AG04449 (cell line): ENCODE measurements at regions of chr1 and their contacts with region 1.

Region 1: DNA sequence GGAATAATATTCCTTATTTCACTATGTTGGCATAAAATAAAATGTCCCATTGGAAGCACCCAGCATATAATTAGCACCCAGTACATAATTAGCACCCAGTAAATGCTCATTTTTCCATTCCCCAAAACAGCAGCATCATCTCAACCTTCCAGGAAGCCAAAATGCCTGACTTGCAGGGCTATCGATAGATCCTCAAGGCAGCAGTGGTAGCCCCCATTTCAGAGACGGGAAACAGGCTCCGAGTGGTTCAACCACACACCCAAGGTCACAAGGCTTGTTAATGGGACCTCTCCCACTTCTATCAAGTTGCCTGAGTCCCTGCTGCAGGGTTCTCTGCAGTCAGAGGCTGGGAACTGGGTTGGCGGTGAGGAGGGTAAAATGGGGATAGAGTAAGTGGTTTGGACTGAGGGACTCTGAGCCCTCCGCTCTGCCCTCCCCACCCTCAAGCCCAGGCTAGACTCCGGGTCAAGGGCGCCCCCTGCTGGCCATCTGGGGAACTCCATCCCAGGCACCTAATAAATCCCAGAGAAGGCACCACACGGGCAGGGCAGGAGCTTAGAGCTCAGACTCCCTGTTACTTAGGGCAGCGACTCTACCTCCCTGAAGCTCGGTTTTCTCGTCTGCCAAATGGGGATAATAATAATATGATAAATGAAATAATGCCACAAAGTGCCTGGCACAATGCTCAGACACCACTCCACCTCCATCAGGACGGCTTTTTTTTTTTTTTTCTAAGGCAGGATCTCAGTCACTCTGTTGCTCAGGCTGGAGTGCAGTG is 21.9 kb upstream of the LAPTM5 start:
- DNase-seq: no peak
- H3K4me3 ChIP-seq: no peak overlapping the region
- CTCF ChIP-seq: peak; percentile 93

Region 2: DNA sequence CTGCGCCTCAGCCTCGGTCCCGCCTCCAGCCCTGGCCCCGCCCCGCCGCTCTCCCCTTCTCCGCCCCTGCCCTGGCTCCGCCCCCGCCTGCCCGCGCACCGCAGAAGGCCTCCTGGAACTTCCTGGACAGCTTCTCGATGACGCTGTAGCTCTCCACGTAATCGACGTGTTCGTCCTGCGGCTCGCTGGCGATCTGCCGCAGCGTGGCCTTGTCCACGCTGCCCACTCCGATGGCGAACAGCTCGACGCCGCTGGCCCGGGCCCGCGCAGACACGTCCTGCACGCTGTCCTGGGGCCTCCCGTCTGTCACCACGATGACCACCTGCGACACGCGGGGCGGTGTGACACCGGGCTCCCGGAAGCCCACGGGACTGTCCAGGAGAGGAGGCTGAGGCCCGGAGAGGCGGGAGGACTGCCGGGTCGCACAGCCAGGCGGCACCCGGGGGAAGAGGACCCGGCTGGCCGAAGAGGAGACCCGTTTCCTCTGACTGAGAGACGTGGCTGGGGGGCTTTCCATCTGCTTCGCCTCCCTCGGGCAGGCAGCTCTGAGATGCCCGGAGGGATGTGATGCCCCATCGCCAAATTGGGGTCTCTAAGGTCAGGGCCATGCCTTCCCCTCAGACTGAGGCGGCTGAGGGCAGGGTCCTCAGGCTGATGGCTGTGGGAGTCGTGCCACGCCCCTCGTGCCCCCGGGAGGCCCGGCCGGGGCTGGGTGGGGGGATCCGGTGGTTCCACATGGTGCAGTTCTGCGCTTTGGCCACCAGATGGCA is 60.7 kb before region 1 on chr1:
- CTCF ChIA-PET with region 1: interaction called, 943 read pairs
- POLR2A ChIA-PET with region 1: interaction called, 13 read pairs
- DNase-seq: peak; percentile 86
- H3K4me3 ChIP-seq: peak overlapping the region; percentile 69
- CTCF ChIP-seq: peak; percentile 86

Region 3: DNA sequence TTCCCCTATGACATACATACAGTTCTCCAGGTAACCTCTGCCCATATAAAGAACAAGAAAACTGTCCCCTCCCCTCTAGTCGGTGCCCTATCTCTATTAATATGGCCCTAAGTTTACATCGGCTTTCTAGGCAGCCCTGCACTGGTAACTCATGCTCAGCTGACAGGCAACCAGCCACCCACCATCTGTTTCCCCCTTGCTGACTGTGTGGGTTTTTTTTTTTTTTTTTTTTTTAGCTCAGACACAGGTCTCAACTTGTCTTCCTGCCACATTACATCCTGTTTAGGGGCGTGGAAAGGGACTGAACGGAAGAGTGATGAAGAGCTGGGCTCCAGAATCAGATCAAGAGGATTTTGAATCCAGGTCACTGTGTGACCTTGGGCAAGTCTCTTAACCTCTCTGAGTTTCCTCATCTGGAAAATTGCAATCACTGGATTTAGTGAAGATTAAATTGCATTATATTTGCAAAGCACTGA is 35.9 kb before region 1 on chr1:
- CTCF ChIA-PET with region 1: interaction called, 31 read pairs
- POLR2A ChIA-PET with region 1: no interaction called
- DNase-seq: no peak
- H3K4me3 ChIP-seq: no peak overlapping the region
- CTCF ChIP-seq: no peak

Region 4: GRCh38 chr1:30756545-30757195 is 22.8 kb before region 1 on chr1:
- CTCF ChIA-PET with region 1: interaction called, 221 read pairs
- POLR2A ChIA-PET with region 1: no interaction called
- DNase-seq: peak; percentile 50
- H3K4me3 ChIP-seq: no peak overlapping the region
- CTCF ChIP-seq: no peak

Region 5: GRCh38 chr1:30801771-30802198 is 22.3 kb after region 1 on chr1:
- CTCF ChIA-PET with region 1: interaction called, 548 read pairs
- POLR2A ChIA-PET with region 1: no interaction called
- DNase-seq: no peak
- H3K4me3 ChIP-seq: peak overlapping the region; percentile 15; the same call in 1 of the 2 replicates
- CTCF ChIP-seq: peak; percentile 95

Region 6: DNA sequence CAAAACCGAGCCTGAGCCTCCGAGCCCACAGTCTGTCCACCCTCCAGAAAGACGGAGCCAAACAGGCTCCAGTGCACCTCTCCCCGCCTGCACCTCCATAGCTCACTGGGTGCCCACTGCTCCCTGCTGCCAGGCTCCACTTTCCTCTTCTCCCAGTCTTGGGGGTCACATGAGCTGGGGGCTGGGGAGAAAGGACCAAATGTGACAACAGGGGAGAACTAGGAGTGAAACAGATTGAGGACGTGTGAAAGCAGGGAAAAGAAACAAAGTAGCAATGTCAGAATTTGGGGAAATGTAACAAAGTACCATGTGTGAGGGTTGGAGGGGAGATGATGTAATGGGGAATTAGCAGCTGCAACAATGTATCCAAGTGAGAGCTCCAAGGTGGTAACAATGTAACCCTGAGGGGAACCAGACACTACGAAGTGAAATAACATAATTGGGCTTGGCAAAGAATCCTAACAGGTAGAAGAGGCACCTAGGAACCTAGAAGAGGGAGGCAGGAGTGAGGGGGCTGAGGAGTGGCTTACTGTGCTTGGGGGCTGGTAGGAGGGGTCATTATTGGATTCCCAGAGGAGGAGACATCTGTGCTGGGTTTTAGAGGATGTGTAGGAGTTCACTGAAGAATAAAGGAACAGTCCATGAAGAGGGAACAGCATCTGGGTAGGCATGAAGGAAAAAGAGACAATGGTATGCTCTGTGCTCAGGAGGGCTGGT is 116.6 kb after region 1 on chr1:
- CTCF ChIA-PET with region 1: interaction called, 12 read pairs
- POLR2A ChIA-PET with region 1: interaction called, 3 read pairs
- DNase-seq: no peak
- H3K4me3 ChIP-seq: no peak overlapping the region
- CTCF ChIP-seq: no peak

Region 7: DNA sequence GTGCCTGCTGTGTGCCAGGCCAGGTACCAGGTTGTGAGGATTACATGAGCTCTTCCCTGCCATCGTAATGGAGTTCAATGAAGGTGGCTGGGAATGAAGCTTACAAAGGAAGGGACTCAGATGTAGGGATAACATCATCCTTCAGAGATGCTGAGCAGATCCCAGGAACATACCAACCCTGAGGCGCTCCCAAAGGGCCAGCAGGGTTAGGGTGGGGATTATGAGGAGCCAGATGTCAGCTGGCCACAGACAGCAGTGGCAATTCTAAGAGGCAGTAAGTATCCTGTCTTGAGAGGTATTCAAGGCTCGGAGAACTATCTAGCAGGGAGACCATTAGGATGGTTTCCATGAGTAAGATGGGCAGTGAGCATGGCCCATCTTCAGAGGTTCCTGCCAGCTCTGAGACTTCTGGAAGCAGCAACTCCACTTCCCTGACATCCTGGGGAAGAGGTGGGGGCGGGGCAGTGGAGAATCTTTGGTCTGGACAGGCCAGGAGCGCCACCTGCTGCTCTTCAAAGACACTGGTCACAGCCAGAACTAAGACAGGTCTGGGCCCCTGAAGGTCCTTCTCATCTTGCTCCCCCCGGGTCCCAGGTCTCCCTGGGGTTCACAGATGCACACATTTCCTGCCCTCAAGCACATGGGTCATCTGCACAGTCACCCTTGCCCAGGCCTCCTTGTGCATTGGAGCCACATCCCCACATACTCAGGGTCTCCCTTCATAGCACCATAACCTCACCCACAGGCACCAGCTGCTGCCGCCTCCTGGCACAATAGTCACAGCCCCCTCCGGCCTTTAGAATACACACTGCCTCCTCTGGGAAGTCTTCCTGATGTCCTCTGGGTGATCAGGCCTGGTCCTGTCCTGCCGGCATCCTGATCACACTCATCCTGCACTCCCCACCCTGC is 131.8 kb after region 1 on chr1:
- CTCF ChIA-PET with region 1: interaction called, 448 read pairs
- POLR2A ChIA-PET with region 1: no interaction called
- DNase-seq: no peak
- H3K4me3 ChIP-seq: no peak overlapping the region
- CTCF ChIP-seq: peak; percentile 94

Region 8: DNA sequence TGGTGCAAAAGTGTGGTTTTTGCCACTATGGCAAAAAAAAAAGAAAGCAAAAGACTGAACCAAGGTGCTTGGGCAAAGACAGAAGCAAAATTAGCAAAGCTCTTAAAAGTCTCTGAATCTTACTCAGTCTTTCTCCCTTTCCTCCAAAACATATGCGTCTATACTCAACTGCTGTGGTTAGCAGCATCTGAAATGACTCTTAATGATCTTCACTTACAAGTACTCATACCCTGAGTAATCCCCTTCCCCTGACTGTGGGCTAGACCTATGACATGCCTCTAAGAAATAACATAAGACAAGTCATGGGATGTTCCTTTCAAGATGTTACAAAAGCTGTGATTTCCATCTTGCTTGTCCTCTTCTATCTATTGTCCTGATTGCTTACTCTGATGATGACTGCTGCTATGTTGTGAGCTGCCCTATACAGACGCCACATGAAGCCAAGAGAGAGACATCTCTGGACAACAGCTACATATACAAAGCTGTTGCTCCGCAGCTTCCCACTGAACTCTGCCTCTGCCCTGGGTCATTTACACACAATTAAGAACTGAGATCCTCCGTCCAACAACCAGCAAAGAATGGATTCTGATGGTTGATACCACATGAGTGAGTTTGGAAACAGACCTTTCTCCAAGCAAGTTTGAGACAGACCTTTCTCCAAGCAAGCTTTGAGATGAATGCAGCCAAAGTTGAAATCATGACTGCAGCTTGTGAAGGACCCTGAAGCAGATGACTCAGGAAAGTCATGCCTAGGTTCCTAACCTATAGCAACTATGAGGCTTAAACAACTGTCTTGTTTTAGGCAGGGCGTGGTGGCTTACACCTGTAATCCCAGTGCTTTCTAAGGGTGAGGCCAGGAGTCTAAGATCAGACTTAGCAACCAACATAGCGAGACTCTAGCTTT is 230.9 kb after region 1 on chr1:
- CTCF ChIA-PET with region 1: no interaction called
- POLR2A ChIA-PET with region 1: no interaction called
- DNase-seq: peak; percentile 47
- H3K4me3 ChIP-seq: no peak overlapping the region
- CTCF ChIP-seq: no peak

Region 9: GRCh38 chr1:31072304-31072746 is 292.8 kb after region 1 on chr1:
- CTCF ChIA-PET with region 1: no interaction called
- POLR2A ChIA-PET with region 1: no interaction called
- DNase-seq: no peak
- H3K4me3 ChIP-seq: no peak overlapping the region
- CTCF ChIP-seq: no peak